ENCODE measurements at regions of chr12 and their contacts with region 1.

Region 1: DNA sequence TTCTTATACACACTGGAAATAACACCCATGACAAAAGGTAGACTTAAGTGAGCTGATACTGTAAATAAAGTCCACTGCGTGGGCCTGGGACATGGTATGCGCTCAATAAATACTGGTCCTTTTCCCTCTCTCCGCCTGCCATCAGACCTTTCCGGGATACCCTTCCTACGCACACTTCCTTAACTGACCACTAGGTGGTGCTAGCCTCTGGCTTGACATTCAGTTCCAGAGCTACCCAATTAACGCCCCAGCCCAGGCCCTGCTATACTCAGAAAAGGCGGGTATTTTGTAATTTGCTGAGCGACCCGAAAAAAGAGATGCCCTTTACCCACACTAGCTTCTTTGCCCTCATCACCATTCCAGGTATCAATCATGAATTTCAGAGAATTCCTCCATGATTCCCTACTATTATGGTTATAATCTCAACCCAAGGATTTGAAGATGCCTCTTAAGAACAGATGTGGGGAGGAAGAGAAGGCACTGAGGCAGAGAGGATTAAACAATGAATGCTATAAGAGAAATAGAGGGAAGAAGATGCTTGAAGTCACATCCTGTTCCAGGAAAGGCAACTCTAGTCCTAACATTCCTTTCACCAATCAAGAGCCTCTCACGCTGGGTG is 3.9 kb upstream of the LRP1 start:
- DNase-seq: peak; percentile 51 to 62
- H3K4me3 ChIP-seq: no peak overlapping the region
- H3K27ac ChIP-seq: no peak overlapping the region
- H3K4me1 ChIP-seq: peaks cover 8% of the 10 kb centered on the region
- H3K27me3 ChIP-seq: no peaks in the 10 kb centered on the region
- CTCF ChIP-seq: peak; percentile 95

Region 2: DNA sequence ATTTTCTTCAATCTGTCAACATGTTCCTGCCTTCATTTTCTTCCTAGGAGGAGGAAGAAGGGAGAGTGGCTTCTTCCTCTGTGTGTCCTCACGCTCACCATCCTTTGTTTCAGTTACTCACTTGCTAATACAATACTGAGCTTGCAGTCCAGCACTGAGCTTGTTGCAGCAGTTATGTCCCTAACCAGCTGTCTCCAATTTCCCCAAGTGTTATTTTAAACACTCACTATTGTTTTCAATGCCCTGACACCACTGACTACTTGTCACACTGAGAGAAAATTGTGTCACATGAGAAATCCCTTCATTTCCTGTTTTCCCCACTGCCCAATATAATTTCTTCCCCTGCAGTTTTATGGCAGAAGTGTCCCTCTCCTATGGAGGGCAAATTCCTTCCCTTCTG is 307.9 kb before region 1 on chr12:
- CTCF ChIA-PET with region 1: no interaction called
- POLR2A ChIA-PET with region 1: no interaction called
- intact Hi-C with region 1: no loop called
- DNase-seq: no peak
- H3K4me3 ChIP-seq: no peak overlapping the region
- H3K27ac ChIP-seq: no peak overlapping the region
- H3K4me1 ChIP-seq: no peaks in the 10 kb centered on the region
- H3K27me3 ChIP-seq: no peaks in the 10 kb centered on the region; the same call in 1 of the 2 replicates
- CTCF ChIP-seq: no peak

Region 3: GRCh38 chr12:57088459-57089248 is 35.7 kb before region 1 on chr12 and contains the start of gene NAB2:
- CTCF ChIA-PET with region 1: interaction called, 4 read pairs
- POLR2A ChIA-PET with region 1: interaction called, 17 read pairs
- intact Hi-C with region 1: loop called (anchors 1 kb)
- DNase-seq: peak; percentile 82 to 95
- H3K4me3 ChIP-seq: peak within 1 kb of the TSS; percentile 94
- H3K27ac ChIP-seq: peak within 1 kb of the TSS; percentile 91
- H3K4me1 ChIP-seq: peaks cover 5% of the 10 kb centered on the region; the same call in 1 of the 2 replicates
- H3K27me3 ChIP-seq: no peaks in the 10 kb centered on the region
- CTCF ChIP-seq: no peak
- total RNA-seq, gene NAB2: 13.8 and 20.2 TPM in 2 replicates

Region 4: DNA sequence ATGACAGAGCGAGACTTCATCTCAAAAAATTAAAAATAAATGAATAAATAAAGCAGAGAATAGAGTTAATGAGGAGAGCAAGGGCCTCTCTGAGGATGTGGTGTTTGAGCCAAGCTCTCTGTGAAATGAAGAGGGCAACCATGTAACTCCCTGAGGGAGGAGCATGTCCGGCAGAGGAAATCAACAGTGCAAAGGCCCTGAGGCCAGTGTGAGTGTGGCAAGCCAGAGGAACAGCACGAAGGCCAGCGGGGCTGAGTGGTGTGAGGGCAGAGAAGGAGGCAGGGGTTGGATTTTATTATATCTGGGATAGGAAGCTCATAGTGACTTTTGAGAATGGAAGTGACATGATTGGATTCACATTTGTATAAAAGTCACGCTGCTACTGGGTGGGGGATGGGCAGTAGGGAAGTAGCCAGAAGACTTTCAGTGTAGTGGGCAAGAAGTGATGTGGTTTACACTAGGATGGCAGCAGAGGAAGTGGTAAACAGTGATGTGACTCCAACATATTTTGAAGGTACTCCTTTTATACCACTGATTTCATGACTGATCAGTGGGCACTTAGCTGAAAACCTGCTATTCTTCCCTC is 33.3 kb after region 1 on chr12:
- CTCF ChIA-PET with region 1: no interaction called
- POLR2A ChIA-PET with region 1: interaction called, 12 read pairs
- intact Hi-C with region 1: no loop called
- DNase-seq: no peak
- H3K4me3 ChIP-seq: no peak overlapping the region
- H3K27ac ChIP-seq: no peak overlapping the region
- H3K4me1 ChIP-seq: no peaks in the 10 kb centered on the region
- H3K27me3 ChIP-seq: no peaks in the 10 kb centered on the region
- CTCF ChIP-seq: no peak

Region 5: DNA sequence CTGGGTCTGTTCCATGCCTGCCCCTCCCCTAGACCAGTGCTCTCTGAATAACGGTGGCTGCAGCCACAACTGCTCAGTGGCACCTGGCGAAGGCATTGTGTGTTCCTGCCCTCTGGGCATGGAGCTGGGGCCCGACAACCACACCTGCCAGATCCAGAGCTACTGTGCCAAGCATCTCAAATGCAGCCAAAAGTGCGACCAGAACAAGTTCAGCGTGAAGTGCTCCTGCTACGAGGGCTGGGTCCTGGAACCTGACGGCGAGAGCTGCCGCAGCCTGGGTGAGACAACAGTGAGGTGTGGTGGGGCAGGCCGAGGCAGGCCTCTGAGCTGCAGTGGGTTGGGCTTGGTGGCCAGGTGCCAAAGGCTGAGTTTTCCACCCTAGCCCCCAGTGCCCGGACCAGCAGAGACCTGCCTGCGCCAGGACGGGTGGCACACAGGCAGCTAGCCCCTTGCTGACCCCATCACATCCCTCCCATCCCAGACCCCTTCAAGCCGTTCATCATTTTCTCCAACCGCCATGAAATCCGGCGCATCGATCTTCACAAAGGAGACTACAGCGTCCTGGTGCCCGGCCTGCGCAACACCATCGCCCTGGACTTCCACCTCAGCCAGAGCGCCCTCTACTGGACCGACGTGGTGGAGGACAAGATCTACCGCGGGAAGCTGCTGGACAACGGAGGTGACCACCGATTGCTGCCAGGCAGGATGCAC is 51.2 kb after region 1 on chr12:
- CTCF ChIA-PET with region 1: interaction called, 40 read pairs
- POLR2A ChIA-PET with region 1: interaction called, 27 read pairs
- intact Hi-C with region 1: loop called (anchors 1 kb)
- DNase-seq: peak; percentile 60 to 89
- H3K4me3 ChIP-seq: no peak overlapping the region
- H3K27ac ChIP-seq: no peak overlapping the region
- H3K4me1 ChIP-seq: peaks cover 15% of the 10 kb centered on the region
- H3K27me3 ChIP-seq: no peaks in the 10 kb centered on the region
- CTCF ChIP-seq: peak; percentile 81

Region 6: GRCh38 chr12:57238854-57239554 is 114.6 kb after region 1 on chr12:
- CTCF ChIA-PET with region 1: no interaction called
- POLR2A ChIA-PET with region 1: interaction called, 15 read pairs
- intact Hi-C with region 1: loop called (anchors 1 kb)
- DNase-seq: peak; percentile 48 to 89
- H3K4me3 ChIP-seq: peak overlapping the region; percentile 51; the same call in 1 of the 2 replicates
- H3K27ac ChIP-seq: no peak overlapping the region
- H3K4me1 ChIP-seq: peaks cover 22% of the 10 kb centered on the region; the same call in 1 of the 2 replicates
- H3K27me3 ChIP-seq: peaks cover 30% of the 10 kb centered on the region
- CTCF ChIP-seq: peak; percentile 97

Measured in PC-9 (cell line).